H1 (cell line): ENCODE measurements at regions of chr13 and their contacts with region 1.

Region 1: GRCh38 chr13:36858290-36858689 is 39.3 kb downstream of the RFXAP start:
- DNase-seq: no peak
- H3K4me3 ChIP-seq: no peak overlapping the region
- H3K27ac ChIP-seq: no peak overlapping the region
- H3K4me1 ChIP-seq: peaks cover 0 to 3% (median 0%) of the 10 kb centered on the region in 4 experiments; a peak in 1 of 7 replicates
- H3K27me3 ChIP-seq: no peaks in the 10 kb centered on the region
- CTCF ChIP-seq: peak in 2 of 3 experiments; percentile 69 to 71; a peak in 3 of 4 replicates
- EP300 ChIP-seq: no peak
- POLR2A ChIP-seq: no peak
- RAD21 ChIP-seq: peak; percentile 69 to 73

Region 2: DNA sequence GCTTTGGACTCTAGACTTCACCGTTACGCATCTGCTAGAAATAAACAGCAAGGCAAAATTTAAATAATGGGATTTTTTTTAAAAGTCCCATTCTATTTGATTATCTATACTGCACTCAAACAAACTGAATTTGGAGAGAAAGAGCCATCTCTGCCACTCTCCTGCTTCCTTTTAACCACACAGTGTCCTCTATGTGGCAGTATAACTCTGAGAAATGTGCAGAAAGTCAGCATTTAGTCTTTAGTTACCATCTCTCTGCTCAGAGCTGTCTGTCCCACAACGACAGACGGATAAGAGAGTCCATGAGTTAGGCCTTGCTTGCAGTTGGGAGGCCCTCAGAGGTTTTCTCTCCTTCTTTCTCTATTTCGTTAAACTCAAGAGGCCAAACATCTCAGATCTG is 404.8 kb before region 1 on chr13:
- CTCF ChIA-PET with region 1: interaction called, 11 read pairs
- POLR2A ChIA-PET with region 1: no interaction called
- DNase-seq: no peak
- H3K4me3 ChIP-seq: no peak overlapping the region
- H3K27ac ChIP-seq: no peak overlapping the region
- H3K4me1 ChIP-seq: peaks cover 2 to 9% (median 7%) of the 10 kb centered on the region in 4 experiments; a peak in 4 of 7 replicates
- H3K27me3 ChIP-seq: no peaks in the 10 kb centered on the region
- CTCF ChIP-seq: peak in 2 of 3 experiments; percentile 56 to 57; a peak in 3 of 4 replicates
- EP300 ChIP-seq: no peak
- POLR2A ChIP-seq: no peak
- RAD21 ChIP-seq: peak; percentile 85 to 89

Region 3: GRCh38 chr13:36841391-36841790 is 16.9 kb before region 1 on chr13:
- CTCF ChIA-PET with region 1: interaction called, 10 read pairs
- POLR2A ChIA-PET with region 1: no interaction called
- DNase-seq: no peak
- H3K4me3 ChIP-seq: no peak overlapping the region
- H3K27ac ChIP-seq: no peak overlapping the region
- H3K4me1 ChIP-seq: peaks cover 0 to 6% (median 1%) of the 10 kb centered on the region in 4 experiments; a peak in 1 of 7 replicates
- H3K27me3 ChIP-seq: no peaks in the 10 kb centered on the region
- CTCF ChIP-seq: no peak
- EP300 ChIP-seq: no peak
- POLR2A ChIP-seq: no peak
- RAD21 ChIP-seq: no peak

Region 4: DNA sequence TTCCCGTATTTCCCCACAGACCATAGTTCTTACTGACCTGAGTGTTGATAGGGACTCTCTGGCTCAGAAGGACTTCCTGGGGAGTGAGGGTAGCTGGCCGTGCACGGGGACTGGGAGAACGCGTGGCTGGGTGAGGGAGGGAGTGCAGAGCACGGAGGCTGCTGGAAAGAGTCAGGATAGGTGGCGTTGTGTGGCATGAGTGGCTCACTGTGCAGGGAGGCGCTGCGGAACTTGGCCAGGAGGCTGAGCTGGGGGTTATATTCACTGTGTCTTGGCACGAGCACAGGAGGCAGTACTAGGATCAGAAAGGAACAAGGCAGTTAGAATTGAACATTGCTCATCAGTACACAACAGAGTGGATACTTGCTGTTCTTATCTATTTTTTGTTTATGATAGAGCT is 14.3 kb after region 1 on chr13:
- CTCF ChIA-PET with region 1: interaction called, 65 read pairs
- POLR2A ChIA-PET with region 1: no interaction called
- DNase-seq: peak in 1 of 2 experiments; percentile 53
- H3K4me3 ChIP-seq: no peak overlapping the region
- H3K27ac ChIP-seq: no peak overlapping the region
- H3K4me1 ChIP-seq: no peaks in the 10 kb centered on the region
- H3K27me3 ChIP-seq: no peaks in the 10 kb centered on the region
- CTCF ChIP-seq: peak in 1 of 3 experiments; percentile 31; a peak in 1 of 4 replicates
- EP300 ChIP-seq: no peak
- POLR2A ChIP-seq: no peak
- RAD21 ChIP-seq: 0 out of 4 replicates have a peak, but pooled peaks of 1 of the 2 experiments have one; percentile 4

Region 5: DNA sequence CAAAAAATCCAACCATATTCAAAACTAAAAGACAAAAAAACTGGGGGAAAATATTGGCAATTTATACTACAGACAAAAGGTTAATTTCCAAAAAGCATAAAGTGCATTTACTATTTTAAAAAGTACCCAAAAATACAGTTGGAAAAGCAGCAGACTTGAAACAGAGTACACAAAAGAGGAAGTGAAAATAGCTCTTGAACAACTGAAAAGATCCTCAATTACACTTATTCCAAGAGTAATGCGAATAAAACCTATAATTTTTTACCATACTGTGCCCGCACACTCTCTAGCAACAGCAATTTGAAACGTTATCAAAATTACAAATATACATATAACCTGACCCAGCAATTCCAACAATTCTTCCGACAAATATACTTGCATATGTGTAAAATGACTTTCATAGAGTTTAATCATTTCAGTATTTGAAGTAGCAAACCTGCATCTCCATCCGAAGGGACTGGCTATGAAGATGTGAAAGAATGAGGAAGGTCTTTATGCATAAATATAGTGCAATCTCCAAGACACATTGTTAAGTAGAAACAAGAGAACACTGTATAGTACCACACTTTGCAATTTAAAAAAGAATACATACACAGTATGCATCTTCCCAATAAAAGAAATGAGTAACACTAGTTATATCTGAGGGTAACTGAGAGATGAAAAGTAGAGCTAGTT is 115.5 kb after region 1 on chr13:
- CTCF ChIA-PET with region 1: interaction called, 36 read pairs
- POLR2A ChIA-PET with region 1: interaction called, 3 read pairs
- DNase-seq: no peak
- H3K4me3 ChIP-seq: no peak overlapping the region
- H3K27ac ChIP-seq: no peak overlapping the region
- H3K4me1 ChIP-seq: no peaks in the 10 kb centered on the region
- H3K27me3 ChIP-seq: no peaks in the 10 kb centered on the region
- CTCF ChIP-seq: no peak
- EP300 ChIP-seq: no peak
- POLR2A ChIP-seq: no peak
- RAD21 ChIP-seq: no peak

Region 6: DNA sequence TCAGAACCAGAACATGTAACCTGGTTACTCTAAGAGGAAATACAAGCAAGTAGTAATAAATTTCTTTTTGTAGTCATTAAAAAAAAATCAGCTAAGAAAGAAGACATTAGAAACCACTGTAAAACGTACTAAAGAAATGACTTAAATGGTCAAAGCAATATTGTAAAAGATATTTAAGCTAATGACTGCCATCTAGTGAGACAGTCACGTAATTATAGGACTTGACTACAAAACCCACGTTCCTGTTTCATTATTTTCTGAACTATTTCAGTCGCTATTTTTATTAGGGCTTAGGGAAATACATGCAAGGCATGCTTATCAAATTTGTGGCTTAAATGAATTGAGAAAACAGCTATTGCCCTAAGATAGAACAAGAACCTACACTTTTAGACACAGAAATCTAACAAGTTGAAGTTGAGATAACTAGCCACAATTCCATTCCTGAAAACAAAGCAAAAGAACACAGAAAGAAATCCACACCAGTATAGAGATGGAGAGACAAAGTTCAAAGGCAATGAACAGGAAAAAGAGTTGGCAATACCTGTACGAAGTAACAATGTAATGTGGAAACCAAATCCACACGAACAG is 123.0 kb after region 1 on chr13:
- CTCF ChIA-PET with region 1: interaction called, 36 read pairs
- POLR2A ChIA-PET with region 1: interaction called, 3 read pairs
- DNase-seq: no peak
- H3K4me3 ChIP-seq: no peak overlapping the region
- H3K27ac ChIP-seq: no peak overlapping the region
- H3K4me1 ChIP-seq: no peaks in the 10 kb centered on the region
- H3K27me3 ChIP-seq: no peaks in the 10 kb centered on the region
- CTCF ChIP-seq: peak in 2 of 3 experiments; percentile 22 to 44; a peak in 2 of 4 replicates
- EP300 ChIP-seq: no peak
- POLR2A ChIP-seq: no peak
- RAD21 ChIP-seq: peak; percentile 60 to 61